ENCODE measurements at regions of chr19 and their contacts with region 1.

Region 1: GRCh38 chr19:35931161-35931873 is 4.9 kb upstream of the LRFN3 start:
- DNase-seq: peak; percentile 99 to 100
- ATAC-seq: peak; percentile 98 to 100 (median 99)
- H3K4me3 ChIP-seq: peak overlapping the region; percentile 54
- H3K27ac ChIP-seq: peak overlapping the region; percentile 62
- H3K4me1 ChIP-seq: peaks cover 13% of the 10 kb centered on the region
- H3K27me3 ChIP-seq: no peaks in the 10 kb centered on the region
- CTCF ChIP-seq: peak; percentile 66

Region 2: GRCh38 chr19:35545001-35545911 is 386.1 kb before region 1 on chr19 and contains the start of gene TMEM147:
- intact Hi-C with region 1: loop called in 1 of 2 experiments (anchors 10 kb)
- DNase-seq: peak; percentile 97
- ATAC-seq: peak; percentile 98 to 99 (median 99)
- H3K4me3 ChIP-seq: peak within 1 kb of the TSS; percentile 79
- H3K27ac ChIP-seq: peak within 1 kb of the TSS; percentile 90
- H3K4me1 ChIP-seq: peaks cover 27% of the 10 kb centered on the region
- H3K27me3 ChIP-seq: no peaks in the 10 kb centered on the region
- CTCF ChIP-seq: no peak
- total RNA-seq, gene TMEM147: 77.1 to 103 (median 85.5) TPM

Region 3: DNA sequence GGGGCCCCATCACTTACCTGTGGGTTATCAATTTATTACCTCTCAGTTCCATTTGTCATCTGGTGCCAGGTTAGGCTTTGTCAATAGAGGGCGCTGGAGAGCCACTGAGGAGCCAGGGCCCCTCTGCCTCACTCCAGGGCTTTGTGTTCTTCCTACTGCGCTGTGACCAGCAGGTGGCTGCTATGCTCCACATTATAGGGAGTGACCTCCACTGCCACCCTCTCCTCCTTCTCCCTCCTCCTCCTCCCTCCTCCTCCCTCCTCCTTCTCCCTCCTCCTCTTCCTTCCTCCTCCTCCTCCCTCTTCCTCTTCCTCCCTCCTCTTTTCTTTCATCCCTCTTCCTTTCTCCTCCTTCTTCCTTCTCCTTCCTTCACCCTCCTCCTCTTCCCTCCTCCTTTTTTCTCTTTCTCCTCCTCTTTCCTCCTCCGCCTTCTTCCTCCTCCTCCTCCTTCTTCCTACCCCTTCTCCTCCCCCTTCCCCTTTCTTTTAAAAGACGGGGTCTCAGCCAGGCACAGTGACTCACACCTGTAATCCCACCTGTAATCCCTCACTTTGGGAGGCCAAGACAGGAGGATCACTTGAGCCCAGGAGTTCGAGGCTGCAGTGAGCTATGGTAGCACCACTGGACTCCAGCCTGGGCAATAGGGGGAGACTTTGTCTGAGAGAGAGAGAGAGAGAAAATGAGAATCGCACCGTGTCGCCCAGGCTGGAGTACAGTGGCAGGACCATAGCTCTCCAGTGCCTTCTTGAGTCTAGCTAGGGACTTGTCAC is 237.3 kb before region 1 on chr19:
- intact Hi-C with region 1: loop called (anchors 5 kb)
- DNase-seq: peak; percentile 81 to 92
- ATAC-seq: peak; percentile 99 to 100 (median 100)
- H3K4me3 ChIP-seq: no peak overlapping the region
- H3K27ac ChIP-seq: no peak overlapping the region
- H3K4me1 ChIP-seq: no peaks in the 10 kb centered on the region
- H3K27me3 ChIP-seq: peaks cover 0 to under 1% (median 0%) of the 10 kb centered on the region in 3 donors
- CTCF ChIP-seq: peak; percentile 96

Region 4: DNA sequence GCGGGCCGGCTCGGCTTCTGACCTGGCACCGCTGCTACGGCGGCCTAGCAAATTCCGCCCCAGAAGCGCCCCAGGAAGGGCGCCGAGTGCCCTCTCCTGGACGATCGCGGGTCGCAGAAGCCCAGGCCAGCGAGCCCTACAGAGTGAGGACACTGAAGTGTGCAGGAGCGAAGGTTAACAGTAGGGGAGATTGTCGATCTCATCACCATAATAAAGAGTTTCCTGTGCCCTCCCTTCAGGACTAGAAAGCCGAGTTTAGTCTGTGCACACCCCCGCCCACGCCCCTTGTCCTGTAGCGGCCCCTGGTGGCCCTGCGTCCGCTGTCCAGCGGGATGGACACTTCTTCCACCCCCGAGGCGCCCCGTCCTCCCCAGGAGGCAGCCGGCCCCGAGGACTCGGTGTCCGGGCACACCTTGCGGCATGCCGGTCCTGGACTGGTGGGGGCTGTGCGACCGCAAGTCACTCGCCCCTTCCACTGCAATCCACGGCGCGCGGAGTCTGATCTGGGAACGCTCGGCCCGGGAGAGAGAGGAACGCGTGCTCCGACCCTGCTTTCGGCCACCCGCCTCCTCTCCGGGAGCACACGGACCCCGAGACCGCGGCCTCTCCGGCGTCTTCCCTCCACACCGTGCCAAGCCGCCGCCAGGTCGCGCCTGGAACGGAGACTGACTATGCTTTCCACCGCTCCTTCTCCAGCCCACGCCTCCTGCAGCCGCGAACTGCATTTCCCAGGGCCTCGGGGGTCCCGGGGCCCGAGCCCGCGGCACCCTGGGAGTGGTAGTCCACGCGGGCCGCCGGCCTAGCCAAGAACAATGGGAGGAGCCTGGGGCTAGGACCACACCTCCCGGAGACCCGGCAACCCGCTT is 214.3 kb before region 1 on chr19:
- intact Hi-C with region 1: loop called in 1 of 2 experiments (anchors 1 kb)
- DNase-seq: peak; percentile 90 to 93
- ATAC-seq: peak; percentile 91 to 93 (median 92)
- H3K4me3 ChIP-seq: peak overlapping the region; percentile 90
- H3K27ac ChIP-seq: peak overlapping the region; percentile 94
- H3K4me1 ChIP-seq: peaks cover 23% of the 10 kb centered on the region
- H3K27me3 ChIP-seq: no peaks in the 10 kb centered on the region
- CTCF ChIP-seq: peak; percentile 90

Region 5: GRCh38 chr19:35736913-35737886 is 194.1 kb before region 1 on chr19:
- intact Hi-C with region 1: no loop called
- DNase-seq: no peak
- ATAC-seq: no peak
- H3K4me3 ChIP-seq: no peak overlapping the region
- H3K27ac ChIP-seq: no peak overlapping the region
- H3K4me1 ChIP-seq: peaks cover 9% of the 10 kb centered on the region
- H3K27me3 ChIP-seq: no peaks in the 10 kb centered on the region
- CTCF ChIP-seq: no peak

Region 6: GRCh38 chr19:35748106-35749020 is 183.0 kb before region 1 on chr19 and contains the start of gene LIN37:
- intact Hi-C with region 1: loop called in 1 of 2 experiments (anchors 5 kb)
- DNase-seq: peak; percentile 99 to 100
- ATAC-seq: peak; percentile 82 to 87 (median 84)
- H3K4me3 ChIP-seq: peak within 1 kb of the TSS; percentile 99
- H3K27ac ChIP-seq: peak within 1 kb of the TSS; percentile 81
- H3K4me1 ChIP-seq: peaks cover 42% of the 10 kb centered on the region
- H3K27me3 ChIP-seq: no peaks in the 10 kb centered on the region
- CTCF ChIP-seq: no peak
- total RNA-seq, gene LIN37: 3.1 to 14.5 (median 7.9) TPM

Region 7: DNA sequence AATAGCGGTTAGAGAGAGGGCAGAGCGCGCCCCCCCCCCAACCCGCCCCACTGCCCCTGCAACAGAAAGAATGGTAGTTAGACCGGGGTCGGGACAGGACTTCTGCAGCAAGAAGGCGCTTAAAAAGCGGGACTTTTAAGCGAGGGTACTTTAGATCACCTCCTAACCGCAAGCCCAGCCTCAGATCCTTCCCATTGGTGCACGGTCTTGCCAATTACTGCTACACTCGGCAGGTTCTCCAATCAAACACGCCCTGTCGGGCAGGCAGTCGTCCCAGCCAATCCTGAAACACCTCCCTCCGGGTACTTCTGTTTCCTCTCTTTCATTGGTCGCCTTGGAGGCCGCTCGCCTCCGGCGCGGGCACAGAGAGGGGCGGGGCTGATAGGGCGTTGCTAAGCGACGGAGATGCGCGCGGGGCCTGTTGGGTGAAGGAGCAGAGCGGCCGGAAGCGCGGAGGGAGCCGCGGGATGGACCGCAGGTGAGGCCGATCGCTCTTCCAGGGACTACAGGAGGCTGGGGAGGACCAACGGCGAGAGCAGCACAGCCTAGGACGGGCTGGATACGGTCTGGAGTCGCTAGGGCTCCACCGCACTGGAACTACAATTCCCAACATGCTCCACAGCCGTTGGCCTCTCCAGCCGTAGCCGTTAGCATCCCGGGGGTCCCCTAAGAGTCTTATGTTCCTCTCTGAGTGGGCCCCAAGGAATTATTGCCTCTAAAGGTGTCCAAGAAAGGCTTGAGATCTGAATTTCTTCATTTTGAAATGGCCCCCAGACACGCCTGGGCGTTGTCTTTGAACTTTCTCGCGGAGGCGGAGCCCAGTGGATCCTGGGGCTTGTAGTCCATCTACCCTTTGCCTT is 173.3 kb before region 1 on chr19 and contains the start of gene PROSER3:
- intact Hi-C with region 1: loop called in 1 of 2 experiments (anchors 5 kb)
- DNase-seq: peak; percentile 97 to 99
- ATAC-seq: peak; percentile 76 to 81 (median 79)
- H3K4me3 ChIP-seq: peak within 1 kb of the TSS; percentile 83
- H3K27ac ChIP-seq: peak within 1 kb of the TSS; percentile 94
- H3K4me1 ChIP-seq: peaks cover 14% of the 10 kb centered on the region
- H3K27me3 ChIP-seq: no peaks in the 10 kb centered on the region
- CTCF ChIP-seq: no peak
- total RNA-seq, gene PROSER3: 4.2 to 16.2 (median 9.0) TPM

Region 8: DNA sequence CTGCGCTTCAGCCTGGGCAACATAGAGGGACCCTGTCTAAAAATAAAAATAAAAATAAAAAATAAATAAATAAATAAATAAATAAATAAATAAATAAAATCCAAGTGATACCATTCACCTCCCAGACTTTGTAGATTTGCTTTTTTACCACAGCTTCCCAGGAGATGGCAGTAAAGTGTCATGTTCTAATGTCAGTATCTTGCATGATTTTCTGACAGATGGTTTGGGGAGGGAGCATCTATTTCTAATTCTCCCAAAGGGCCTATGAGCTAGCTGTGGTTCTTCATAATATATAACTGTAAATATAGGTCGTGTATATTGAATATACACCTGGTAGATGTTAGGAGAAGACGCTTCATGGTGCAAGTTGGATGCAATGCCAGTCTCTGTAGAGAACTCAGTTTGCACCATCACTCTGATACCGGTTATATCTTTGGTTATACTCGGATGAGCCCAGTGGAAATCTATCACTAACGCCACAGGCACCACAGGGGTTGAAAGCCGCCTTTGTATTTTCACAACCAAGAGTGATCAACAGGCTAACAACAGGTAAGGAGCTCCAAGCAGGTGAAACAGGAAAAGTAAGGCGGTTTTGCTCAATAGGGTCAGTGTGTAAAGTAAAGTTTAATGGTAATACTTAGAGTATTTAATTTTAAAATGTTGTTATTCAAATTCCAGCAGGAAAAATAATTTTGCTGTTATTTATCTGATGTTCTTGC is 49.0 kb before region 1 on chr19:
- intact Hi-C with region 1: loop called in 1 of 2 experiments (anchors 1 kb)
- DNase-seq: no peak
- ATAC-seq: peak in 1 of 4 donors; percentile 63
- H3K4me3 ChIP-seq: no peak overlapping the region
- H3K27ac ChIP-seq: no peak overlapping the region
- H3K4me1 ChIP-seq: no peaks in the 10 kb centered on the region
- H3K27me3 ChIP-seq: peaks cover 0 to 21% (median 5%) of the 10 kb centered on the region in 3 donors
- CTCF ChIP-seq: peak; percentile 54

Measured in psoas muscle (tissue), 8 donors.